K562 (cell line): ENCODE measurements at regions of chr7 and their contacts with region 1.

Region 1: DNA sequence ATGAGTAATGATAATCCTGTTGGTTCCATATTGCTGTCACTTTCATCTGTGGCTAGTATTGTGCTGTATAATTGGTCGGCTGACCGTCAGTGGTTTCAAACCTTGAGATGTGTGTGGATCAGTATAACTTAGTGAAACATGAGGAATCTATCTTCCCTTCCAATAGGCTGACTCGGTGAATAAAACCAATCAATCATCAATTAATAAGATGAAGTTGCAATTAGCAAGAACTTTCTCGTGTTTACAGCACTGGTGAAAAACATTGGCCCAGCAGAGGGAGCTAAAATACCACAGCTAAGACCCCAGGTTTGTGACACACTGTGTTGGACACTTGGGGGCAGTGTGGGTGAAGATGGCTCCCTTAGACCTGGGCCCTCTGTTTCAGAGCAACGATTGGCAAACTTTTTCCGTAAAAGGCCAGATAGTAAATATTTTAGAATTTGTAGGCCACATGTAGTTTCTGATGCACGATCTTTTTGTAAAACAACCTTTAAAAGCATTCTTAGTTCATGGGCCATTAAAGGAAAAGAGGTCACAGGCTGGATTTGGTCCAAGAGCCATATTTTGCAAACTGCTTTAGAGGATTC is 47.8 kb downstream of the STRA8 start:
- DNase-seq: peak; percentile 88 to 93 (median 91)
- ATAC-seq: peak; percentile 99
- H3K4me3 ChIP-seq: no peak overlapping the region
- H3K27ac ChIP-seq: no peak overlapping the region
- H3K4me1 ChIP-seq: peaks cover 0 to 4% of the 10 kb centered on the region in 2 experiments; a peak in 1 of 5 replicates
- H3K27me3 ChIP-seq: peaks cover 12 to 17% of the 10 kb centered on the region in 2 experiments
- CTCF ChIP-seq: peak; percentile 100
- EP300 ChIP-seq: peak; percentile 38
- POLR2A ChIP-seq: no peak
- RAD21 ChIP-seq: peak; percentile 100

Region 2: GRCh38 chr7:135362871-135363270 is 81.4 kb after region 1 on chr7:
- CTCF ChIA-PET with region 1: interaction called, 12 read pairs
- POLR2A ChIA-PET with region 1: no interaction called
- in situ Hi-C with region 1: no loop called
- intact Hi-C with region 1: loop called (anchors 2 kb)
- DNase-seq: peak; percentile 11 to 32 (median 26)
- ATAC-seq: peak; percentile 77
- H3K4me3 ChIP-seq: no peak overlapping the region
- H3K27ac ChIP-seq: no peak overlapping the region
- H3K4me1 ChIP-seq: no peaks in the 10 kb centered on the region
- H3K27me3 ChIP-seq: no peaks in the 10 kb centered on the region
- CTCF ChIP-seq: peak in 2 of 3 experiments; percentile 39 to 53; a peak in 3 of 6 replicates
- EP300 ChIP-seq: no peak
- POLR2A ChIP-seq: no peak
- RAD21 ChIP-seq: no peak

Region 3: GRCh38 chr7:135509903-135510602 is 228.6 kb after region 1 on chr7 and contains the start of gene CNOT4:
- CTCF ChIA-PET with region 1: interaction called, 14 read pairs
- POLR2A ChIA-PET with region 1: no interaction called
- in situ Hi-C with region 1: no loop called
- intact Hi-C with region 1: loop called (anchors 2 kb)
- DNase-seq: peak; percentile 99
- ATAC-seq: peak; percentile 93
- H3K4me3 ChIP-seq: peak within 1 kb of the TSS; percentile 70
- H3K27ac ChIP-seq: peak within 1 kb of the TSS; percentile 94
- H3K4me1 ChIP-seq: peaks cover 10 to 11% of the 10 kb centered on the region in 2 experiments; a peak in 4 of 5 replicates
- H3K27me3 ChIP-seq: no peaks in the 10 kb centered on the region
- CTCF ChIP-seq: no peak; a peak in 1 of 6 replicates
- EP300 ChIP-seq: no peak
- POLR2A ChIP-seq: peak; percentile 97
- RAD21 ChIP-seq: no peak; a peak in 1 of 4 replicates
- polyA plus RNA-seq, gene CNOT4: 12.6 to 24.1 TPM

Region 4: GRCh38 chr7:135645296-135645904 is 363.9 kb after region 1 on chr7:
- CTCF ChIA-PET with region 1: interaction called, 51 read pairs
- POLR2A ChIA-PET with region 1: interaction called, 6 read pairs
- in situ Hi-C with region 1: loop called (anchors 10 kb)
- intact Hi-C with region 1: no loop called
- DNase-seq: peak; percentile 42 to 61 (median 52)
- ATAC-seq: peak; percentile 81
- H3K4me3 ChIP-seq: no peak overlapping the region
- H3K27ac ChIP-seq: no peak overlapping the region
- H3K4me1 ChIP-seq: peaks cover under 1 to 6% of the 10 kb centered on the region in 2 experiments; a peak in 2 of 5 replicates
- H3K27me3 ChIP-seq: no peaks in the 10 kb centered on the region
- CTCF ChIP-seq: peak; percentile 64 to 82 (median 70); a peak in 5 of 6 replicates
- EP300 ChIP-seq: no peak
- POLR2A ChIP-seq: no peak
- RAD21 ChIP-seq: peak; percentile 69 to 72

Region 5: DNA sequence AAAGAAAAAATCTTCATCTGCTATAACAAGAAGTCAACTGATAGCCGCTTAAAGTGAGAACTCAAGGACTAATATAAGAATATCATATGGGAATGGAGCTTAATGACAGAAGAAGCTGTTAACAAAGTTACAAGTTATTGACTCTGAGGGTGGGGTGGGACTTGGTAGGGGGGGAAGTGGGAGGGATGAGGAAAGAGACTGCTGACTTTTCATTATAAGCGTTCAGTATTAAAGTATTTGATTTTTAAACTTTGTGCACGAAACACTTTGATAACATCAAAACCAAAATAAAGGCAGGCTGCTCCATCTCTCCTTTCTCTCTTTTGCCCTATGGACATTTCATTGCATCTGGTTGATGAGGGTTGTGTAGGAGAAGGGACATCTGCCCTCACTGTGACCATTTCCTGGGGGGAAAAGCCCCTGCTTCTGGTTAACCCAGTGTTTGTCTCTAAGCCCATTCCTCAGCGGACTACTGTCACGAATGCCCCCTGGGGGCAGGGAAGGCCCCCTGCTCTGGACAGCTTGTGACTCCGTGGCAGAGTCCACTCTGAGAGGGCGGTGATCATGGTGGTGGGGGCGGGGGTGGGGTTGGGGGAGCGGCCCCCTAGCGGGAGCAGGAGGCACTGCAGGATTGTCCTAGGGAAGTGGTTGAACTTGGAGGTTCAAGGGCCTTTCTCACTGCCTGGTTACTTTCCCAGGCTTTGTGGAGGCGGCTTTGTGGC is 429.1 kb after region 1 on chr7:
- CTCF ChIA-PET with region 1: no interaction called
- POLR2A ChIA-PET with region 1: no interaction called
- in situ Hi-C with region 1: no loop called
- intact Hi-C with region 1: loop called (anchors 5 kb)
- DNase-seq: peak; percentile 78 to 93 (median 92)
- ATAC-seq: peak; percentile 88
- H3K4me3 ChIP-seq: peak overlapping the region; percentile 33
- H3K27ac ChIP-seq: no peak overlapping the region; the same call in 2 of the 3 replicates
- H3K4me1 ChIP-seq: peaks cover 2 to 14% of the 10 kb centered on the region in 2 experiments; a peak in 3 of 5 replicates
- H3K27me3 ChIP-seq: peaks cover 25 to 40% of the 10 kb centered on the region in 2 experiments; a peak in 4 of 5 replicates
- CTCF ChIP-seq: peak; percentile 63 to 72 (median 68)
- EP300 ChIP-seq: no peak
- POLR2A ChIP-seq: no peak
- RAD21 ChIP-seq: no peak

Region 6: DNA sequence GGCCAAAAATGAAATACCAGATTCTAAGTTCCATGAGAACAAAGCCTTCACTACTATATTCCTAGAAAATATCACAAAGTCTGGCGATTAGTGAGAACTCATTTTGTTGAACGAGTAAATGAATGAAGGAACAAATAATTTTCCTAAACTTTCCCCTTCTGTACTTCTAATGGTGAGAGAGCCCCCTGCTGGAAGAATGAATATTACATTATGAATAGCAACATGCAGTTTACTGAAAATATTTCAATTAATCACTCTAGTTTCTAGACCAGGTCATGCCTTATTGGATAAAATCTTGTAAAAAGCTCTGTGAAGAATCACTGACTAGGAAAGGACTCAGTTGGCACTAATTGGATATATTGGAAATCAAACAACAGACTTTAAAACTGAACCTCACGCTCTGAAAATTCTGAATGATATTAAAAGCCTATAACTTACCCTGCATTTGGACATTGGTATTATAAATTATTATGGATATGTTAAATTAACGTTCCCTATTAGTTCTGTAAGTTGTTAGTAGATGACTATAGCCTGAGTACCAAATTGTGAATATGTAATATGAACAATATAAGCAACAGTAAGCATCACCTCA is 728.1 kb after region 1 on chr7:
- CTCF ChIA-PET with region 1: interaction called, 8 read pairs
- POLR2A ChIA-PET with region 1: no interaction called
- in situ Hi-C with region 1: loop called (anchors 10 kb)
- intact Hi-C with region 1: loop called (anchors 2 kb)
- DNase-seq: peak; percentile 52 to 79 (median 57)
- ATAC-seq: peak; percentile 81
- H3K4me3 ChIP-seq: no peak overlapping the region
- H3K27ac ChIP-seq: no peak overlapping the region
- H3K4me1 ChIP-seq: no peaks in the 10 kb centered on the region
- H3K27me3 ChIP-seq: no peaks in the 10 kb centered on the region
- CTCF ChIP-seq: peak; percentile 54 to 95 (median 71); a peak in 4 of 6 replicates
- EP300 ChIP-seq: peak; percentile 44; the same call in 1 of the 2 replicates
- POLR2A ChIP-seq: no peak
- RAD21 ChIP-seq: peak; percentile 99 to 100